Posterior vena cava (tissue), 2 donors: ENCODE measurements at regions of chr6 and their contacts with region 1.

Region 1: DNA sequence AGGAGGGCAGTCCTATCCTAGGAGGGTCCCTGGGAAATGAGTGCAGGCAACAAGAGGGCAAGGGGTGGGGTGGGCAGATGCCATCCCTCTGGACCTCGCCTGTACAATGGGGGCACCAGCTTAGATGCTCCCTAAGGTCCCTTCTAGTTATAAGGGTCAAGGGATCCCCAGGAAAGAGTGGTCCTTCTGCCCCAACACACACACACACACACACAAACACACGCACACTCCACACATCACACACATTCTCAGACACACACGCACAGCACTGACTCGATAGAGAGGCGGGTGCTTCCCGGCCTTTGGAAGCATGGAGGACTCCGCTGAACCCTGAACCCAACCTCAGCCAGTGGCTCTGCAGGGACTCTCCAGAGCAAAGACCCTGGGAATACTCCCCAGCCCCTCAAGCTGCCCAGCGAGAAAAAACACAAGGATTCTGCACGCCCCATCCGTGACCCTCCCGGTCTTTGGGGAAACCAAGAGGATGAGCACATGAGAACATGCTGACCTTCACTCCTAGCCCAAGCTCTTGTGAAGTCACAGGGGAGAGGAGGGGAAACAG is 64.6 kb downstream of the MDGA1 start:
- DNase-seq: no peak

Region 2: DNA sequence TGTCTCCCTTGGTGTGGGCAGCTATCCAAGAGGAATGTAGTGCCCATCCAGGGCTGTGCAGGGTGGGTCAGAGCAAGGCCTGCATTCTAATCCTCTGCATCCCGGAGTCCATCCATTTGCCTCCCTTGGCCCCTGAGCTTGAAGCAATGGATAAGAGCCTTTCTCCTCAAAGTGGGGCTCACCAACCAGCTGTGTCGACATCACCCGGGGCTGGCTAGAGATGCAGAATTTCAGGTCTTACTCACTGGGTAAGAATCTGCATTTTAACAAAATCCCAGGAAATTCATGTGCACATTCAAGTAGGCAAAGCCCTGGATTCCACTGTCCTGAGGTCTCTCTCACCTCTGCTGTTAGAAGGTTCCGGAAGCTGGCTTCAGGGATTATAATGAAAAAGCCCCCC is 30.7 kb before region 1 on chr6:
- intact Hi-C with region 1: loop called in 1 of 2 experiments (anchors 1 kb)
- DNase-seq: peak; percentile 46